Panc1 (cell line): ENCODE measurements at regions of chr6 and their contacts with region 1.

Region 1: DNA sequence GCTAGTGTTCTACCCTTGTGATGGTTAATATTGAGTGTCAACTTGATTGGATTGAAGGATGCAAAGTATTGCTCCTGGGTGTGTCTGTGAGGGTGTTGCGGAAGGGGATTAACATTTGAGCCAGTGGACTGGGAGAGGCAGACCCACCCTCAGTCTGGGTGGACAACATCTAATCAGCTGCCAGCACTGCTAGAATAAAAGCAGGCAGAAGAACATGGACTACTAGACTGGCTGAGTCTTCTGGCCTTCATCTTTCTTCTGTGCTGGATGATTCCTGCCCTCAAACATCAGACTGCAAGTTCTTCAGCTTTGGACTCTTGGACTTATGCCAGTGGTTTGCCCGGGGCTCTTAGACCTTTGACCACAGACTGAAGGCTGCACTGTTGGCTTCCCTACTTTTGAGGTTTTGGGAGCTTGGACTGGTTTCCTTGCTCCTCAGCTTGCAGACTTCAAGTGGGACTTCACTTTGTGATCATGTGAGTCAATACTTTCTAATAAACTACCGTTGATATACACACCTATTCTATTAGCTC is 50.1 kb downstream of the SDHAF4 start:
- DNase-seq: no peak
- ATAC-seq: no peak
- H3K4me3 ChIP-seq: no peak overlapping the region
- H3K27ac ChIP-seq: no peak overlapping the region
- H3K4me1 ChIP-seq: no peaks in the 10 kb centered on the region
- H3K27me3 ChIP-seq: peaks cover 2% of the 10 kb centered on the region; the same call in 1 of the 2 replicates
- CTCF ChIP-seq: no peak

Region 2: GRCh38 chr6:70663881-70664466 is 47.2 kb after region 1 on chr6:
- CTCF ChIA-PET with region 1: no interaction called
- POLR2A ChIA-PET with region 1: interaction called, 13 read pairs
- in situ Hi-C with region 1: no loop called
- intact Hi-C with region 1: no loop called
- DNase-seq: no peak
- ATAC-seq: no peak
- H3K4me3 ChIP-seq: no peak overlapping the region
- H3K27ac ChIP-seq: no peak overlapping the region
- H3K4me1 ChIP-seq: peaks cover 11% of the 10 kb centered on the region
- H3K27me3 ChIP-seq: no peaks in the 10 kb centered on the region
- CTCF ChIP-seq: no peak

Region 3: GRCh38 chr6:71902261-71902660 is 1285.5 kb after region 1 on chr6:
- CTCF ChIA-PET with region 1: no interaction called
- POLR2A ChIA-PET with region 1: no interaction called
- in situ Hi-C with region 1: no loop called
- intact Hi-C with region 1: no loop called
- DNase-seq: no peak
- ATAC-seq: no peak
- H3K4me3 ChIP-seq: no peak overlapping the region
- H3K27ac ChIP-seq: no peak overlapping the region
- H3K4me1 ChIP-seq: no peaks in the 10 kb centered on the region
- H3K27me3 ChIP-seq: no peaks in the 10 kb centered on the region
- CTCF ChIP-seq: no peak